GM10248 (cell line): ENCODE measurements at regions of chr4 and their contacts with region 1.

Region 1: GRCh38 chr4:1351854-1352633 is 5.0 kb downstream of the UVSSA start:
- DNase-seq: peak; percentile 83
- CTCF ChIP-seq: peak; percentile 91

Region 2: GRCh38 chr4:1130316-1131186 is 221.5 kb before region 1 on chr4:
- CTCF ChIA-PET with region 1: interaction called, 44 read pairs
- POLR2A ChIA-PET with region 1: no interaction called
- DNase-seq: peak; percentile 76
- CTCF ChIP-seq: peak; percentile 99

Region 3: DNA sequence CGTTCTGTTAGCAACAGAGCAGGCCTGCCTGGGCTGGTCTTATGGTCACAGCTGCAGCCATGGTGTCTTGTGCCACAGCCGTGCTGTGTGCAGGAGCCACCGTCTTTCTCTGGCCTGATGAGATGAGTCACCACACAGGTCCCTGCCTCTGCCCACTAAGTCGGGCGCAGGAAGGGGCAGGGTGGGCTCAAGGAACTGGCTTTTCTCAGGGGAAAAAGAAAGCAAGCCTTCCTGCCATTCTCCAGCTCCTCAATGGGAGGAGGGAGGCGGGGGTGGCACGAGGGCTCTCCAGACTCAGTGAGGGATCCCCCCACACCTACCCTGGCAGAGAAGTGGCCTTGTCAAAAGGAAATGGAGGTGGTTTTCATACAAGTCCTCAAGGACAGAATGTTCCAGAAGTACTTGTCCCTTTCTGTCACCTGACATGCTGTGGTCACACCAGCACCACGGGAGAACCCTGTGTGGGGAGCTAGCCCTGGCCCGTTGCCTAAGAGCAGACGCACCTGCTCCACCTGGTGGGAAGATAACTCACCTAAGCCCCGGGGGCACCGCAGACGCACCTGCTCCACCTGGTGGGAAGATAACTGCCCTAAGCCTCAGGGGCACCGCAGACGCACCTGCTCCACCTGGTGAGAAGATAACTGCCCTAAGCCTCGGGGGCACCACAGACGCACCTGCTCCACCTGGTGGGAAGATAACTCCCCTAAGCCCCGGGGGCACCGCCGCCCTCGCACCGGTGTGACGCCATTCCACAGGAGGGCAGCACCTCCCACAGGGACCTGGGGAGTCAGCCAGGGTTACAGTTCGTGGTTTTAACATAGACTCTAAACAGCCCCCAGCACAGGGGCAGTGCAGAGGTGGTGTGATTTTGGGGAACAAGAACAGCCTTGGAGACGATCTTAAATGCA is 13.5 kb after region 1 on chr4:
- CTCF ChIA-PET with region 1: interaction called, 14 read pairs
- POLR2A ChIA-PET with region 1: no interaction called
- DNase-seq: no peak
- CTCF ChIP-seq: no peak

Region 4: DNA sequence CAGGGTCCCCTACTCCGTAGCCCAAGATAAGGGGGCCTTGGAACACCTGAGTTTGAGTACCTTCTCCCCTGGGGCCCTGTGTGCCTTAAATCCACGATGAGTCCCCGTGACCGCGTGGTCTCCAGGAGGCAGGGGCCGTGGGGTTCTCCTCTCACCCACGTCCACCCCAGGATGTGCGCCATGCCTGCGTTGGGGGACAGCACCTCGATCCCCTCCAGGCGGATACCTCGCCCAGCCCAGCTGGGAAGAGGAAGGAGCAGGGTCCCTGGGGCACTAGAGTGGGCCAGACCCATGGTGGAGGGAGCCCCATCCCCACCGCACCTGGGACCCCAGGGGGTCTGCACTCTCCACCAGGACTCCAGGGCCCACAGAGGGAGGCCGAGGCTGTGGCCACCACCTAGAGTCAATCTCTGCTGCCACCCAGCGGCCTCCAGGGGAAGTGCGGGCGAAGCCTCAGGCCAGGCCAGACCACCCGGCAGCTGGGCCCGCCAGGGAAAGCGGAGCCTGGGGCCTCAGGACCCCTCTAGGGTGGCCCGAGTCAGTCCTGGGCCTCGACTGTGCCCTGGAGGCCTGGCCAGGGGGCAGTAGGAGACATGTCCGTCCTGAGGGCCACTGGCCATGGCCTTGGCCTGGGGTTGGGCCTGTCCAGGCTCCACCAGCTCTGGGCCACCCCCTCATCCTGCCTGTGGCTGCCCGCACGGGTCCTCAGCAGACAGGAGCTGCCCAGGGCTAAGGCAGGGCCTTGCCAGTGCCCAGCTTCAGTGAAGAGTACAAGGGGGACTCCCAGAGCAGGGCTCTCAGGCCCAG is 277.1 kb after region 1 on chr4:
- CTCF ChIA-PET with region 1: interaction called, 20 read pairs
- POLR2A ChIA-PET with region 1: no interaction called
- DNase-seq: peak; percentile 87
- CTCF ChIP-seq: peak; percentile 95